CD4-positive, alpha-beta T cell (primary cell): ENCODE measurements at regions of chrX and their contacts with region 1.

Region 1: GRCh38 chrX:71622576-71623450 is 4.5 kb upstream of the CXCR3 start:
- DNase-seq: peak; percentile 36 to 90 (median 48)
- ATAC-seq: peak; percentile 57
- H3K4me3 ChIP-seq: peak overlapping the region; percentile 19
- H3K4me3 Mint-ChIP-seq: peak overlapping the region; percentile 51
- H3K27ac ChIP-seq: peak overlapping the region; percentile 54 to 71
- H3K27ac Mint-ChIP-seq: peak overlapping the region; percentile 92
- H3K4me1 ChIP-seq: peaks cover 83% of the 10 kb centered on the region
- H3K4me1 Mint-ChIP-seq: peaks cover 60% of the 10 kb centered on the region
- H3K27me3 ChIP-seq: no peaks in the 10 kb centered on the region
- H3K27me3 Mint-ChIP-seq: no peaks in the 10 kb centered on the region
- CTCF ChIP-seq: no peak

Region 2: GRCh38 chrX:71482228-71482958 is 140.4 kb before region 1 on chrX:
- CTCF ChIA-PET with region 1: no interaction called
- POLR2A ChIA-PET with region 1: no interaction called
- intact Hi-C with region 1: no loop called
- DNase-seq: no peak
- ATAC-seq: no peak
- H3K4me3 ChIP-seq: no peak overlapping the region
- H3K4me3 Mint-ChIP-seq: no peak overlapping the region
- H3K27ac ChIP-seq: no peak overlapping the region
- H3K27ac Mint-ChIP-seq: no peak overlapping the region
- H3K4me1 ChIP-seq: no peaks in the 10 kb centered on the region
- H3K4me1 Mint-ChIP-seq: no peaks in the 10 kb centered on the region
- H3K27me3 ChIP-seq: no peaks in the 10 kb centered on the region
- H3K27me3 Mint-ChIP-seq: no peaks in the 10 kb centered on the region
- CTCF ChIP-seq: no peak

Region 3: DNA sequence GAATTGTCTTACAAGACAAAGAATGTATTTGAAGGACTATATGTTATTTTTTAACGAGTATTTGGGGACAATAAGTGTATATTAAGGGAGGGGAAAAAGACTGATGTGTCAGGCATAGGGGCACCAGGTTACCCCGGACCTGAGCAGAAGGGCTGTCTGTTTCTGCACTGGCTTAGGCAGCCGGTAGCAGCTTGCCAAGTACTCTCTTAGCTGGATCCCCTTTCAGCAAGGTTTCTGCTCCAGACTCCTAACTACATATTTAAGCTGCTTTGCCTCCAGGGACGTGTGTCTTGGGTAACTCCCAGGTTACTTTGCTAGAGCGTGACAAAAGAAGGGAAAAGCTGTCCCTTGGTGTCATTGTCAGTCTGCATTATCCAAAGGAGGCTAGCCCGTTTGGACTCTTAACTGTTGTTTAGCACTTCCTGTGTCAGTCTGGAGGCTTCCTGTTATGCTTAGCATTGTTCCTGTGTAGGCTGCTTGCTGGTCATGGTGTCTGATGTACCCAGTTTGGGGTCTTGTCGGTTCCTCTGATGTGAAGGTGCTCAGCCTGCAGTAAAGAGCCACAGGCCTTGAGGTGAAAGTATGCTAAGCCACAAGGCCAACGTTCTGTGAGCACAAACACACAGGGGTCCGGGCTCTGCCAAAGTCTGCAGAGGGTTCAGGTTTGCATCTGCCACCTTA is 16.1 kb before region 1 on chrX:
- CTCF ChIA-PET with region 1: no interaction called
- POLR2A ChIA-PET with region 1: interaction called, 14 read pairs
- intact Hi-C with region 1: no loop called
- DNase-seq: peak in 5 of 14 experiments; percentile 11 to 61 (median 45)
- ATAC-seq: peak; percentile 74
- H3K4me3 ChIP-seq: no peak overlapping the region
- H3K4me3 Mint-ChIP-seq: peak overlapping the region; percentile 58
- H3K27ac ChIP-seq: peak overlapping the region in 1 of 2 donors; percentile 26
- H3K27ac Mint-ChIP-seq: peak overlapping the region; percentile 93
- H3K4me1 ChIP-seq: peaks cover 45% of the 10 kb centered on the region
- H3K4me1 Mint-ChIP-seq: peaks cover 45% of the 10 kb centered on the region
- H3K27me3 ChIP-seq: no peaks in the 10 kb centered on the region
- H3K27me3 Mint-ChIP-seq: no peaks in the 10 kb centered on the region
- CTCF ChIP-seq: no peak

Region 4: DNA sequence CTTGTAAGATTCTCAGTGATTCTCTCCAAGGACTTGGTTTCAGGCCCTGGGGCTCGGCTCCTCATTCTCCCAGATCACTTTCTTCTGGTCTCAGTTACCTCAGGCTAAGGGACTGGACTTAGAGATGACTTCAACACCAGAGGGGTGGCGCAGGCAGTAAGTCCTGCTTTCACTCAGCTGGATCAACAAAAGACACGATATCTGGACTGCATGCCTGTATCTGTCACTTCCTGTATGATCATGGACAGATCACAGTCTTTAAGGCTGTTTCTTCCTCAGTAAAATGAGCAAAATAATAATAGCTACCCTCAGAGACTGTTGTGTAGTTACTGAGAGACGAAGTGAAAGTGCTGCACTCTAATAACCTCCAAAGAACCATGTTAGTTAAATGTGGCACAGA is 15.0 kb after region 1 on chrX:
- CTCF ChIA-PET with region 1: interaction called, 11 read pairs
- POLR2A ChIA-PET with region 1: interaction called, 8 read pairs
- intact Hi-C with region 1: no loop called
- DNase-seq: peak in 1 of 14 experiments; percentile 7
- ATAC-seq: peak; percentile 32
- H3K4me3 ChIP-seq: no peak overlapping the region
- H3K4me3 Mint-ChIP-seq: no peak overlapping the region
- H3K27ac ChIP-seq: peak overlapping the region in 1 of 2 donors; percentile 44
- H3K27ac Mint-ChIP-seq: no peak overlapping the region
- H3K4me1 ChIP-seq: peaks cover 40% of the 10 kb centered on the region
- H3K4me1 Mint-ChIP-seq: peaks cover 17% of the 10 kb centered on the region
- H3K27me3 ChIP-seq: no peaks in the 10 kb centered on the region
- H3K27me3 Mint-ChIP-seq: no peaks in the 10 kb centered on the region
- CTCF ChIP-seq: no peak

Region 5: DNA sequence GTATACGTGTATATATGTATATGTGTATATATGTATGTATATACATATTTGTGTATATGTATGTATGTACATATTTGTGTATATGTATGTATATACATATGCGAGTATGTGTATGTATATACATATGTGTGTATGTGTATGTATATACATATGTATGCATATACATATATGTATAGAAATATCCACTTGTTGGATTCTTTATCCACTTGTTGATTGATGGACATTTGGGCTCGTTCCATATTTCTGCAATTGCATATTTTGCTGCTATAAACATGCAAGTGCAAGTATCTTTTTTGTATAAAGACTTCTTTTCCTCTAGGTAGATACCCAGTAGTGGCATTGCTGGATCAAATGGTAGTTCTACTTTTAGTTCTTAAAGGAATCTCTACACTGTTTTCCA is 262.3 kb after region 1 on chrX:
- CTCF ChIA-PET with region 1: no interaction called
- POLR2A ChIA-PET with region 1: no interaction called
- intact Hi-C with region 1: no loop called
- DNase-seq: no peak
- ATAC-seq: no peak
- H3K4me3 ChIP-seq: no peak overlapping the region
- H3K4me3 Mint-ChIP-seq: no peak overlapping the region
- H3K27ac ChIP-seq: no peak overlapping the region
- H3K27ac Mint-ChIP-seq: no peak overlapping the region
- H3K4me1 ChIP-seq: no peaks in the 10 kb centered on the region
- H3K4me1 Mint-ChIP-seq: no peaks in the 10 kb centered on the region
- H3K27me3 ChIP-seq: no peaks in the 10 kb centered on the region
- H3K27me3 Mint-ChIP-seq: peaks cover 8% of the 10 kb centered on the region
- CTCF ChIP-seq: no peak

Region 6: DNA sequence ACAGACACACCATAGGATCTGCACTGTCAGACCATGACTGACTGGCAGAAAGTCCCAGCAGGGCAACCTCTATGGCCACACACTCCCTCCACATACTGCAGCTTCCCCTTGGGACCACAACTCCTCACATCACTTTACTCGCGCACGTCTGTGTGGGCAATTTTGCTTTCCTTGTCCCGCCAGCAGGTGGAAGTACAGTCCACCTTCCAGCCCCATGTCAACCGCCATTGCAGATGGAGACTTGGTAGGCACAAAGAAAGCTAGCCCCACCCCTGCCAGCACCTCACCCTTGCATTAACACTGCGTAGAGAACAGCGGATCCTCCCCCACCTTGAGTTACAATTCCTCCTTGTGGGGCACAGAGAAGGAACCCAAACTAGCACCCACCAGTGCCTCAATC is 1666.2 kb after region 1 on chrX:
- CTCF ChIA-PET with region 1: no interaction called
- POLR2A ChIA-PET with region 1: no interaction called
- intact Hi-C with region 1: no loop called
- DNase-seq: no peak
- ATAC-seq: no peak
- H3K4me3 ChIP-seq: no peak overlapping the region
- H3K4me3 Mint-ChIP-seq: no peak overlapping the region
- H3K27ac ChIP-seq: no peak overlapping the region
- H3K27ac Mint-ChIP-seq: no peak overlapping the region
- H3K4me1 ChIP-seq: no peaks in the 10 kb centered on the region
- H3K4me1 Mint-ChIP-seq: no peaks in the 10 kb centered on the region
- H3K27me3 ChIP-seq: no peaks in the 10 kb centered on the region
- H3K27me3 Mint-ChIP-seq: no peaks in the 10 kb centered on the region
- CTCF ChIP-seq: no peak